ENCODE measurements at regions of chr12 and their contacts with region 1.

Region 1: DNA sequence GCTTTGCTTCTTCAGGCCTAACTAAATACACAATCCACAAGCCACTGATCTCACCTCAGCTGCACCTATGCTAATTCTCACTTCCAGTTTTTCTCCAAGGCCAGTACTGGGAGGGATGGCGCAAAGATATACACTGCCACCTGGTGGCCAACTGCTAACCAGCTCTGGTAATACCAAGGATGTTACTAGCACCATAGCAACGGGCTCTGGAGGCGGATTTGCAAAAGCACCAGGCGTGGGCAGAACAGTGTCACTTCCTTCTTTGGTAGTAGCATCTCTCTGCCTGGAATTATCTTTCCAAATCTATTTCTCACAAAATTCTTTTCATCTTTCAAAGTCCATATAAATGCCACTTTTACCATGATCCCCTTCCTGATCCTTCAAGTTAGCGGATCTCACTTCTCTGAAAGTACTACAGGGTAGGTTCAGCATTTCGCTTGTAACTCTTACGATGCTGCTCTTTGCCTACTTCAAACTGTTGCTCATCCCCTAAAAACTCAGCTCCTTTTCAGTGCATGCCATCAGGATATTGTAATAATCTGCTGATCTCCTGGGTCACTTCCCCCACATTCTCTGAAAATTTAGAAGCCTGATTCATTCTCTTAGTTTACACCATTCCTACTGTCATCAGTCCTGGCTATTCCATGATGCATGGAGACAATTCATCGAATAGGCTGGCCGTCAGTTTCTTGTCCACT is 37.1 kb upstream of the FOXJ2 start:
- DNase-seq: peak; percentile 89
- H3K4me3 ChIP-seq: no peak overlapping the region
- H3K27ac ChIP-seq: no peak overlapping the region
- H3K4me1 ChIP-seq: peaks cover 3% of the 10 kb centered on the region
- H3K27me3 ChIP-seq: no peaks in the 10 kb centered on the region
- CTCF ChIP-seq: peak; percentile 87

Region 2: GRCh38 chr12:7832059-7832696 is 163.2 kb before region 1 on chr12:
- CTCF ChIA-PET with region 1: interaction called, 5 read pairs
- POLR2A ChIA-PET with region 1: no interaction called
- intact Hi-C with region 1: loop called (anchors 5 kb)
- DNase-seq: peak; percentile 79
- H3K4me3 ChIP-seq: no peak overlapping the region
- H3K27ac ChIP-seq: no peak overlapping the region
- H3K4me1 ChIP-seq: peaks cover 5% of the 10 kb centered on the region
- H3K27me3 ChIP-seq: no peaks in the 10 kb centered on the region
- CTCF ChIP-seq: peak; percentile 76

Region 3: GRCh38 chr12:7859552-7859951 is 135.9 kb before region 1 on chr12:
- CTCF ChIA-PET with region 1: interaction called, 12 read pairs
- POLR2A ChIA-PET with region 1: no interaction called
- intact Hi-C with region 1: loop called (anchors 1 kb)
- DNase-seq: no peak
- H3K4me3 ChIP-seq: no peak overlapping the region
- H3K27ac ChIP-seq: no peak overlapping the region
- H3K4me1 ChIP-seq: peaks cover 18% of the 10 kb centered on the region
- H3K27me3 ChIP-seq: no peaks in the 10 kb centered on the region
- CTCF ChIP-seq: no peak

Region 4: DNA sequence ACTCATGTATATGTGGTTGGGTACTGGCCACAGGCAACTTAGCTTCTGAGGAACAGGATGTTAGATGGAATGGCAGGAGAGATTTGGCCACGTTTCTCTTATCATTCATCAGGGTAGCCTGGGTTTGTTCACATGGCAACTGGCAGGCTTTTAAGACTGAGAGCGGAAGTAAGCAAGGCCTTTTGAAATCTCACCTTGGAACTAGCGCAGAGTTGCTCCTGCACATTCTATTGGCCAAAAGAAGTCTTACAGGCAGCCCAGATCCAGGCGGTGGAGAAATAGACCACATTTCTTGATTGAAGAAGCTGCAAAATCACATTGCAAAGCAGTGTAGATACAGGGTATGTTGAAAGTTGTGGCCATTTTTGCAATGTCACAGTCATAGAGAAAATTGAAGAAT is 131.7 kb after region 1 on chr12:
- CTCF ChIA-PET with region 1: no interaction called
- POLR2A ChIA-PET with region 1: no interaction called
- intact Hi-C with region 1: no loop called
- DNase-seq: no peak
- H3K4me3 ChIP-seq: no peak overlapping the region
- H3K27ac ChIP-seq: no peak overlapping the region
- H3K4me1 ChIP-seq: no peaks in the 10 kb centered on the region
- H3K27me3 ChIP-seq: no peaks in the 10 kb centered on the region
- CTCF ChIP-seq: no peak

Measured in A673 (cell line).